ENCODE measurements at regions of chr7 and their contacts with region 1.

Region 1: DNA sequence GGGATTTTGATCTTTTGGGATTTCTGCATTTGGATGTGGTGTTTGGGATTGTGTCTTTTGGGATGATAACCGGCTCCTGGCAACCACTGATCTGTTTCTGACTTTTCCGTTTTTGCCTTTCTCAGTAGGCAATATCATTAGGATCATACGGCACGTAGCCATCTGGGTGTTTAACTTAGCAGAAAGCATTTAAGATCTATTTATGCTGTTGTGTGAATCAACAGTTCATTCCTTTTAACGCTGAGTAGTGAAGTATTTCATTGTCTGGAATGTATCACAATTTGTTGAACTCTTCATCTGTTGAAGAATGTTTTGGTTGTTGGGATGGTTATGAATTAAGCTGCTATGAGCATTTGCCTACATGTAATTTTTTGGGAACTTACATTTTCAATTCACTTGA is 459.6 kb downstream of the SDK1 start:
- DNase-seq: peak; percentile 1
- ATAC-seq: no peak
- H3K4me3 ChIP-seq: peak overlapping the region; percentile 27; the same call in 1 of the 2 replicates
- H3K27ac ChIP-seq: peak overlapping the region; percentile 77
- H3K4me1 ChIP-seq: peaks cover 28% of the 10 kb centered on the region
- H3K27me3 ChIP-seq: no peaks in the 10 kb centered on the region
- CTCF ChIP-seq: no peak

Region 2: GRCh38 chr7:3695602-3696001 is 65.0 kb before region 1 on chr7:
- CTCF ChIA-PET with region 1: no interaction called
- POLR2A ChIA-PET with region 1: no interaction called
- intact Hi-C with region 1: loop called (anchors 5 kb)
- DNase-seq: peak; percentile 38
- ATAC-seq: peak; percentile 90
- H3K4me3 ChIP-seq: no peak overlapping the region
- H3K27ac ChIP-seq: no peak overlapping the region
- H3K4me1 ChIP-seq: no peaks in the 10 kb centered on the region
- H3K27me3 ChIP-seq: no peaks in the 10 kb centered on the region
- CTCF ChIP-seq: peak; percentile 77

Region 3: DNA sequence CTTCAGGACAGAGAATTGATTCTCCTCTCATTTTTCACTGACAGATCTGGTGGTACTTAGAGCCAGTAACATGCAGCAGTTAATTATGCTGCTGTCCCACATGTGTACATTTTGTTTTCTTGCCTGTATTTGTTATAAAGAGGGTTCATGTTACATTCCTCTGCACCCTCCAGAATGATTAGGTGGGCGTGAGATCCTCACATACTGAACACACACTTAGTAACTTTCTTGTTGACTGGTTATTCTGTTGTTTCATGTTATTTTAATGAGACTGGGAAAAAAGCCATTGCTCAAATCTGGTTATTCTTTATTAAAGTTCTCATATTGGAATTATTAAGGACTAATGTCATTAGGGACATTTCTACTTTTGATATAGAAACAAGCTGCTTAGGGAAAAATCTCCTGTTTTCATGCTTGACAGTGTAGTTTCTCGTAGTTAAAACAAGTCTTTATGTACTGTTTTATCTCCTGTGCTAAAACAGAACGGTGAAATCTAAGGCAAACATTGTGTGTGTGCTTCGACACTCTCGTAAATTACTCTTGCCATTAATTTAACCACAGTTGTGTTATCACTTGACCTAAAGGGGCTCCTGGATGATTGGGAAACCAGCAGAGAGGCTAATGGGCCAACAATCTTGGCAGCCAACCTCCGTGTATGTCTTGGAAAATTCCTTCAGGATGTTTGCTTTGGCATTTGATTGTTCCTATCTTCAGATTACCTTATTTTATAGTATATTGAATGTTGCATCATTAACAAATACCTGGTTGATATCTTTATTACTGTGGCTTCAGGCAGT is 50.3 kb before region 1 on chr7:
- CTCF ChIA-PET with region 1: no interaction called
- POLR2A ChIA-PET with region 1: no interaction called
- intact Hi-C with region 1: loop called (anchors 1 kb)
- DNase-seq: peak; percentile 51
- ATAC-seq: peak; percentile 81
- H3K4me3 ChIP-seq: no peak overlapping the region
- H3K27ac ChIP-seq: no peak overlapping the region
- H3K4me1 ChIP-seq: peaks cover 7% of the 10 kb centered on the region
- H3K27me3 ChIP-seq: no peaks in the 10 kb centered on the region
- CTCF ChIP-seq: no peak

Region 4: GRCh38 chr7:3832199-3832598 is 71.5 kb after region 1 on chr7:
- CTCF ChIA-PET with region 1: no interaction called
- POLR2A ChIA-PET with region 1: no interaction called
- intact Hi-C with region 1: loop called (anchors 5 kb)
- DNase-seq: peak; percentile 4
- ATAC-seq: peak; percentile 16; the same call in 1 of the 2 replicates
- H3K4me3 ChIP-seq: no peak overlapping the region
- H3K27ac ChIP-seq: no peak overlapping the region
- H3K4me1 ChIP-seq: peaks cover 20% of the 10 kb centered on the region
- H3K27me3 ChIP-seq: no peaks in the 10 kb centered on the region
- CTCF ChIP-seq: no peak

Region 5: GRCh38 chr7:3897438-3898385 is 137.1 kb after region 1 on chr7:
- CTCF ChIA-PET with region 1: no interaction called
- POLR2A ChIA-PET with region 1: interaction called, 7 read pairs
- intact Hi-C with region 1: loop called (anchors 1 kb)
- DNase-seq: peak; percentile 61
- ATAC-seq: peak; percentile 69
- H3K4me3 ChIP-seq: no peak overlapping the region
- H3K27ac ChIP-seq: no peak overlapping the region
- H3K4me1 ChIP-seq: no peaks in the 10 kb centered on the region
- H3K27me3 ChIP-seq: no peaks in the 10 kb centered on the region
- CTCF ChIP-seq: peak; percentile 89